ENCODE measurements at regions of chr1 and their contacts with region 1.

Region 1: GRCh38 chr1:17236779-17237560 is 11.9 kb upstream of the PADI3 start:
- DNase-seq: peak; percentile 66 to 97 (median 91)

Region 2: GRCh38 chr1:17059739-17060460 is 177.1 kb before region 1 on chr1:
- intact Hi-C with region 1: loop called (anchors 2 kb)
- DNase-seq: peak; percentile 63 to 91 (median 82)

Region 3: GRCh38 chr1:17070163-17070525 is 166.8 kb before region 1 on chr1:
- intact Hi-C with region 1: loop called (anchors 5 kb)
- DNase-seq: peak in 1 of 42 donors; percentile 15

Measured in head of caudate nucleus (tissue), 42 donors.